PC-3 (cell line): ENCODE measurements at regions of chr4 and their contacts with region 1.

Region 1: DNA sequence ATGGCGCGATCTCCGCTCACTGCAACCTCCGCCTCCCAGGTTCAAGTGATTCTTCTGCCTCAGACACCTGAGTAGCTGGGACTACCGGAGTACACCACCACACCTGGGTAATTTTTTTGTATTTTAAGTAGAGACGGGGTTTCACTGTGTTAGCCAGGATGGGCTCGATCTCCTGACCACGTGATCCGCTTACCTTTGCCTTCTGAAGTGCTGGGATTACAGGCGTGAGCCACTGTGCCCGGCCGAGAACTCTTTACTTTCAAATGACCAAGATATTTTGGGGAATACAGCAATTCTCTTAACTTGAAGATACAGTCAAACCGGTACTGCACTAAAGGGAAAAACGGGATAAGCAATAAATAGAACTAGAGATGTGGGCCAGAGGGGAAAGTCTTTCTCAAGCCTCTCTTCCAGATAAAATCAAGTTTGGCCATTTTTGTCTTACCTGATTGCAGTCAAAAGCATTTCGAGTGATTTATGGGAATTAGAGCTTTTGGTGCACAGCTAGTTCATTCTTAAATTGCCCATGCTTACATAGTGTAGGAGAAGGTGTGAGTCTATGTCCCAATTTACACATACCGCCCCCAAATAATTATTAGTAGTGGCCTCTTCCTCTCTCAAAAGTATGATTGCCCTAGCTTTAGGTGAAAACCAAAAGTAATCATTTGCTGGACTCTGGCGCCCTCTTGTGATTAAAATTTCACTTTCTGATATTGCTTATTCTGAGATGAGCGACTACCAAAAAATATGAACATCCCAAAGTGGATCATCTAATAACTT is 53.2 kb upstream of the ABCG2 start:
- DNase-seq: peak; percentile 81
- ATAC-seq: peak; percentile 64
- H3K4me3 ChIP-seq: no peak overlapping the region
- H3K27ac ChIP-seq: no peak overlapping the region
- H3K4me1 ChIP-seq: no peaks in the 10 kb centered on the region; the same call in 1 of the 2 replicates
- H3K27me3 ChIP-seq: no peaks in the 10 kb centered on the region
- CTCF ChIP-seq: peak; percentile 76

Region 2: DNA sequence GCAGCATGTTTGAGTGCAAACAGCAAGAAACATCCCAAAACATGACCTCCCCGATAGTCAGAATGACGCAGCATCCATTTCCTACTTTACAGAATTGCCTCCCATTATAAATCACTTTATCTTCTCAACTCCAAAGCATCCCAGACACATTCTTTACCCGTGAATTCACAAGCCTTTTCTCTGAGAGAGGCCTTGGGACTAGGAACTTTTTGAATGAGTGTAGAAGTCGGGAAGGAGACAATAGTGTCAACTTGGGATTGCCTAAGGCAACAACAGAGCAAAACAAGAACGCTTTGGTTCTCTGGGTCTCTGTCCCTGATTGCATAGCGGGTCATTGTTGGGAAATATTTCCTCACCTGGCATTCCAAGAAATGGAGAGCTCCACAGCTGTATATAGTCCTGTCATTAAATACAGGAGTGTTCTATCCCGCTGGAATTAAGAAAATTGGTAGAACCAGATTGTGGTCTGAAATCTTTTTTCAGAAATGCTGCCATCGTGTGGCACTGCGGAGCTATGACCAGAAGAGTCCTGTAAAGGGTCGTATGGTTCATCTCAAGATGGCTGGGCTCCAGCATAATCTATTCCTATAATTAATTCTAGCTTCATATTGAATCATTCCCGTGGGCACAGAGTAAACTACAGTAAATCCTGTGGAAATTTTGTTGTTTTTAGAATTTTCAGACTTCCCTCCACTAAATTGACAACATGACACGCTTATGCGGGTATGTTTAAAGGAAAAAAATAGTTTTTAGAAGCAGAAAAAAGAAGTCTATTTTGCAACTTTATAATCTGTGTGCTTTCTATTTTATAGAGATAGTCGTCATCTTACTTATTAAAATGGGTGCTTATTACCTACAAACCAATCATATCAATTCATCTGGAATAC is 238.1 kb before region 1 on chr4:
- CTCF ChIA-PET with region 1: no interaction called
- POLR2A ChIA-PET with region 1: no interaction called
- intact Hi-C with region 1: loop called (anchors 5 kb)
- DNase-seq: peak; percentile 70
- ATAC-seq: peak; percentile 60; the same call in 1 of the 2 replicates
- H3K4me3 ChIP-seq: no peak overlapping the region
- H3K27ac ChIP-seq: no peak overlapping the region
- H3K4me1 ChIP-seq: peaks cover 14% of the 10 kb centered on the region; the same call in 1 of the 2 replicates
- H3K27me3 ChIP-seq: no peaks in the 10 kb centered on the region
- CTCF ChIP-seq: peak; percentile 74

Region 3: DNA sequence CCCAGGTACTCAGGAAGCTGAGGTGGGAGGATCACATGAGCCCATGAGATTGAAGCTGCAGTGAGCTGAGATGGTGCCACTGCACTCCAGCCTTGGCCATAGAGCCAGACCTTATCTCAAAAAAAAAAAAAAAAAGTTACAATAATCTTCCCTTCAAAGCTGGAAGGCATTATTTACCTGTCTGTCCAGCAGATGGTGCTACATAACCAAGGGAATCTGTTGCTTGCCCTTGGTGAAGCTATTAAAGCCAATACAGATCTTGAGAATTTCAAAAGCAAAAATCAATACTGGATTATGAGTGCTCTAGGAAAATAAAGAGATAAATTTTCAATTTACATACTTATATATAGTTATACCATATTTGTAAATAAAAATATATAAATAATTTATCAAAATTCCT is 178.4 kb before region 1 on chr4:
- CTCF ChIA-PET with region 1: interaction called, 16 read pairs
- POLR2A ChIA-PET with region 1: no interaction called
- intact Hi-C with region 1: loop called (anchors 1 kb)
- DNase-seq: peak; percentile 74
- ATAC-seq: no peak
- H3K4me3 ChIP-seq: no peak overlapping the region
- H3K27ac ChIP-seq: no peak overlapping the region
- H3K4me1 ChIP-seq: peaks cover 23% of the 10 kb centered on the region
- H3K27me3 ChIP-seq: no peaks in the 10 kb centered on the region
- CTCF ChIP-seq: peak; percentile 60

Region 4: DNA sequence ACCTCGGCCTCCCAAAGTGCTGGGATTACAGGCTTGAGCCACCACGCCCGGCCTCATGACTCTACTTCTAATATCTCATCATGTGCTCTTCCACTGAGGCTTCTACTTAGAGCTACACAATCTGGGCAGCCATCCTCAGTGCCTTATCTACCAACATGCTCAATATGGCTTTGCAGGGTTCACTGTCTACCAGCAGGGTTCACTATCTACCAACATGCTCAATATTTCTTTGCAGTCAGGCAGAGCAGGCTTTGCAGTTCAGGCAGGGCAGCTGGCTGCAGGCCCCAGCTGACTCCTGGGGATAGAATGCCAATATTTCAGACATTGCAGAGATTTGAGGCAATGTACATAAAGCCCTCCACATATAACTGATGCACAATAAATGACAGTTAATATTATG is 156.8 kb before region 1 on chr4:
- CTCF ChIA-PET with region 1: interaction called, 7 read pairs
- POLR2A ChIA-PET with region 1: no interaction called
- intact Hi-C with region 1: loop called (anchors 1 kb)
- DNase-seq: peak; percentile 69
- ATAC-seq: peak; percentile 84
- H3K4me3 ChIP-seq: no peak overlapping the region
- H3K27ac ChIP-seq: no peak overlapping the region
- H3K4me1 ChIP-seq: no peaks in the 10 kb centered on the region
- H3K27me3 ChIP-seq: no peaks in the 10 kb centered on the region
- CTCF ChIP-seq: peak; percentile 72